Naive thymus-derived CD4-positive, alpha-beta T cell (primary cell): ENCODE measurements at regions of chr21 and their contacts with region 1.

Region 1: GRCh38 chr21:14215971-14216641 is at the start of gene RBM11:
- DNase-seq: peak; percentile 69 to 88 (median 82)
- ATAC-seq: peak; percentile 99
- H3K4me3 ChIP-seq: peak within 1 kb of the TSS; percentile 80
- H3K4me3 Mint-ChIP-seq: peak within 1 kb of the TSS; percentile 86 to 93 (median 90)
- H3K27ac ChIP-seq: peak within 1 kb of the TSS; percentile 77
- H3K27ac Mint-ChIP-seq: peak within 1 kb of the TSS in 8 of 9 donors; percentile 61 to 88 (median 82)
- H3K4me1 ChIP-seq: peaks cover 0 to 8% of the 10 kb centered on the region in 2 donors
- H3K4me1 Mint-ChIP-seq: peaks cover 0 to 10% (median 8%) of the 10 kb centered on the region in 7 donors
- H3K27me3 ChIP-seq: no peaks in the 10 kb centered on the region
- H3K27me3 Mint-ChIP-seq: peaks cover 4 to 26% (median 8%) of the 10 kb centered on the region in 5 donors
- total RNA-seq, gene RBM11: 0.46 to 19.3 (median 4.9) TPM

Region 2: DNA sequence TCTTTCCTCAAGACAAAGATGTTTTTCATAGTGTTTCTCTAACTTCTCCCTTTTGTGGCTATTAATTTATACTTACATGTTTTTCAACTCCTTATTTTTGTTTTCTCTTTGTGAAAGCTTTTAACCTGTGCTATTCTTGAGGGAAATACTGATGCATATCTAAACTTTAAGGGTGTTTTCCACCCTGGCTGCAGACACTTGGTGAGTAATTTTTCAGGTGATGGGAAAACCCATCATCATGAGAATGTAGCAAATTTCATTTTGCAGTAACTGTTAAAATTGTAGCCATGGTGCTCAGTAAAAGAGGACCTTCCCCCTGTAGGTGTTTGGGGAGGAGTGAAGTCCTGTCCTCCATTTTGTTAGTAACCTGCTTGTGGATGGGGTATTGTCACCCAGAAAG is 129.6 kb before region 1 on chr21:
- CTCF ChIA-PET with region 1: no interaction called
- POLR2A ChIA-PET with region 1: no interaction called
- intact Hi-C with region 1: loop called in 1 of 2 experiments (anchors 10 kb)
- DNase-seq: no peak
- ATAC-seq: no peak
- H3K4me3 ChIP-seq: no peak overlapping the region
- H3K4me3 Mint-ChIP-seq: no peak overlapping the region
- H3K27ac ChIP-seq: no peak overlapping the region
- H3K27ac Mint-ChIP-seq: peak overlapping the region in 1 of 9 donors; percentile 53
- H3K4me1 ChIP-seq: no peaks in the 10 kb centered on the region
- H3K4me1 Mint-ChIP-seq: peaks cover 0 to 19% (median 0%) of the 10 kb centered on the region in 7 donors
- H3K27me3 ChIP-seq: no peaks in the 10 kb centered on the region
- H3K27me3 Mint-ChIP-seq: no peaks in the 10 kb centered on the region

Region 3: DNA sequence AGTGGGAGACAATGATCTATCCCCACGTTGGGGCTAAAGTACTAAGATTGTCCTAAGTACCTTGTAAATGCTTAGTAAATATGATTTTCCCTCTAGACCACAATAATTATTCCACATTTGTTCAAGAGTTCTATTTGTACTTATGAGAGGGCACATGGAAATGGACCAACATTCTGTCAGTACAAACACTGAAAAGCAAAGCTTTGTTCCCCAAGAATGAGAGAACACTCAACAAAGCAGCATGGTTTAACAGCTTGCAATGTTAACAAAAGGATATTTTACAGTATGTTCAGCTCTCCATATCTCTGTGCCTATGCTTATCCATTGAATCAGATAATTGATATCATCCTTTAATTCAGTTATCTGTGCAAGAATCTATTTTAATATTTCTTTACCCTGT is 35.2 kb after region 1 on chr21:
- CTCF ChIA-PET with region 1: no interaction called
- POLR2A ChIA-PET with region 1: no interaction called
- intact Hi-C with region 1: loop called in 1 of 2 experiments (anchors 2 kb)
- DNase-seq: no peak
- ATAC-seq: no peak
- H3K4me3 ChIP-seq: no peak overlapping the region
- H3K4me3 Mint-ChIP-seq: no peak overlapping the region
- H3K27ac ChIP-seq: no peak overlapping the region
- H3K27ac Mint-ChIP-seq: no peak overlapping the region
- H3K4me1 ChIP-seq: no peaks in the 10 kb centered on the region
- H3K4me1 Mint-ChIP-seq: peaks cover 3 to 9% (median 5%) of the 10 kb centered on the region in 7 donors
- H3K27me3 ChIP-seq: peaks cover 0 to 5% of the 10 kb centered on the region in 2 donors
- H3K27me3 Mint-ChIP-seq: peaks cover 5 to 23% (median 13%) of the 10 kb centered on the region in 5 donors

Region 4: GRCh38 chr21:15172992-15173626 is 957.0 kb after region 1 on chr21:
- CTCF ChIA-PET with region 1: no interaction called
- POLR2A ChIA-PET with region 1: no interaction called
- intact Hi-C with region 1: no loop called
- DNase-seq: no peak
- ATAC-seq: no peak
- H3K4me3 ChIP-seq: no peak overlapping the region
- H3K4me3 Mint-ChIP-seq: no peak overlapping the region
- H3K27ac ChIP-seq: no peak overlapping the region
- H3K27ac Mint-ChIP-seq: no peak overlapping the region
- H3K4me1 ChIP-seq: no peaks in the 10 kb centered on the region
- H3K4me1 Mint-ChIP-seq: peaks cover 0 to 18% (median 10%) of the 10 kb centered on the region in 7 donors
- H3K27me3 ChIP-seq: no peaks in the 10 kb centered on the region
- H3K27me3 Mint-ChIP-seq: no peaks in the 10 kb centered on the region

Region 5: GRCh38 chr21:15841856-15842564 is 1625.9 kb after region 1 on chr21:
- CTCF ChIA-PET with region 1: no interaction called
- POLR2A ChIA-PET with region 1: no interaction called
- intact Hi-C with region 1: loop called in 1 of 2 experiments (anchors 10 kb)
- DNase-seq: no peak
- ATAC-seq: no peak
- H3K4me3 ChIP-seq: no peak overlapping the region
- H3K4me3 Mint-ChIP-seq: no peak overlapping the region
- H3K27ac ChIP-seq: no peak overlapping the region
- H3K27ac Mint-ChIP-seq: no peak overlapping the region
- H3K4me1 ChIP-seq: no peaks in the 10 kb centered on the region
- H3K4me1 Mint-ChIP-seq: peaks cover 0 to 13% (median 3%) of the 10 kb centered on the region in 7 donors
- H3K27me3 ChIP-seq: no peaks in the 10 kb centered on the region
- H3K27me3 Mint-ChIP-seq: no peaks in the 10 kb centered on the region